ENCODE measurements at regions of chr9 and their contacts with region 1.

Region 1: DNA sequence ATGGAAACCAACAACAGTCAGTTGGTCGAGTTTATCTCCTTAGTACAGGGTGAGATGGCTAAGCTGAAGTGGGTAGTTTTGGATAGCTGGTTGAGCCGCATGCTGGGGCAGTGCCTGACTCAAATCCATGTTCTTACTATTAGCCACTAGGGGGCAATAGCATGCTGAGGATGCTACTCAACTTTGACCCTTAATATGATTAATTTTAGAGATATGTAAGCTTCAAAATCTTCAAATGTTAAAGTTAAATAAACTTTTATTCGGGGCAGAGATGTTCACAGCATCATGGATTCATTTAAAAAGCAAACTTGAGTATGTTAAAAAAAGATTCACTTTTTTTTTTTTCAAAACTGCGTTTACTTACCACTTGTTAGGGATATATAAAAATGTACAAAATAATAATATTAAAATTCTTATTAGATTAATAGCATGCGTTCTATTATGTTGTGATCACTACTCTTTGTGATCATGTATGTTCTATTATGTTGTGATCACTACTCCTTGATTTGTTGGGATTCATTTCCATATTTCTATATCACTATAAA is 57.0 kb downstream of the C9orf153 start:
- DNase-seq: peak; percentile 25
- H3K4me3 ChIP-seq: no peak overlapping the region
- H3K27ac ChIP-seq: no peak overlapping the region
- H3K4me1 ChIP-seq: no peaks in the 10 kb centered on the region
- H3K27me3 ChIP-seq: no peaks in the 10 kb centered on the region
- CTCF ChIP-seq: peak; percentile 82 to 86

Region 2: DNA sequence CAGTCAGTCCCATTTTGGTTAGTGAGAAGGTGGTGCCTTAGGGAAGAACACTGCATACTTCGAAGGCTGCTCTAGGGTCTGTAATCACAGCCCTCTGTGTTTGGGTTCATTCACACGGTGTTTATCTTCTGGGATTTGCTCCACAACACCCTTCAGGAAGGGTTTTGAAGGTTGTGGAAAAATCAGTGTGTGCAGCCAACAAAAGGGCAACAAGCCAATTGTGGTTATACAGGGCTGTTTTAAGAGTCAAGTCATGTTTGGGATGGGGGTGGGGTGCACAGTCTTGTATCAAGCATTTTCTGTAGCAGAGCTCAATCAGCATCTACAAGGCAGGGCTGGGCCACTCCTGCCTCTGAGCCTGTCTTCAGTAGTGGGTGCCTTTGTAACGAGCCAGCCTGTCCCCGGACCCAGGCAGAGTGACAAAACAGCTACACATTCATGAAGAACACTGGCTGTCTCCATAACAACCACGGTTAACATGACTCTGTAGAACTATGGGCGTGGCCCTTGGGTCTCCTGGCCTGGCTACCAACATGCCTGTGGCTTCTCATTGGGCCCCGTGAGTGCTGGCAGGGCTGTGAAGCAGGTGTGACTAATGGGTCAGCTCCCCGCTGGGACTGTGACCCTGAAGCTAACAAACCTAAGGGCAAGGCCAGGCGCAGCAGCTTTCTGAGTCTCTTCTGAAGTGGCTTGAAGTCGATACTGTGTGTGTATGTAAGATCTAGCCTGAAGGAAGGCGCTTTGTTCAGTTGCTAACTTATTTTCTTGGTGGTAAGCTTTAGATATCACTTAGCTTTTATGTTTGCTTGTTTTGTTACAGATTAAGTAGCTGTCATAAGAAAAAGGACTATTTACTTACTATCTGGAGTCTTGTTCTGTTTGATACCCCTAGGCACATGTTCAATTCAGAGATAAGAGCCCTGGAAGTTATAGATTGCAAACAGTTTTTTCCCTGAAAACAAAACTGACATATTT is 75.1 kb before region 1 on chr9:
- CTCF ChIA-PET with region 1: no interaction called
- dilution Hi-C with region 1: loop called (anchors 5 kb)
- in situ Hi-C with region 1: no loop called
- intact Hi-C with region 1: no loop called
- DNase-seq: peak; percentile 91
- H3K4me3 ChIP-seq: no peak overlapping the region
- H3K27ac ChIP-seq: peak overlapping the region; percentile 57
- H3K4me1 ChIP-seq: peaks cover 15% of the 10 kb centered on the region
- H3K27me3 ChIP-seq: no peaks in the 10 kb centered on the region
- CTCF ChIP-seq: no peak

Measured in mammary epithelial cell (primary cell).